Posterior vena cava (tissue), 2 donors: ENCODE measurements at regions of chr18 and their contacts with region 1.

Region 1: DNA sequence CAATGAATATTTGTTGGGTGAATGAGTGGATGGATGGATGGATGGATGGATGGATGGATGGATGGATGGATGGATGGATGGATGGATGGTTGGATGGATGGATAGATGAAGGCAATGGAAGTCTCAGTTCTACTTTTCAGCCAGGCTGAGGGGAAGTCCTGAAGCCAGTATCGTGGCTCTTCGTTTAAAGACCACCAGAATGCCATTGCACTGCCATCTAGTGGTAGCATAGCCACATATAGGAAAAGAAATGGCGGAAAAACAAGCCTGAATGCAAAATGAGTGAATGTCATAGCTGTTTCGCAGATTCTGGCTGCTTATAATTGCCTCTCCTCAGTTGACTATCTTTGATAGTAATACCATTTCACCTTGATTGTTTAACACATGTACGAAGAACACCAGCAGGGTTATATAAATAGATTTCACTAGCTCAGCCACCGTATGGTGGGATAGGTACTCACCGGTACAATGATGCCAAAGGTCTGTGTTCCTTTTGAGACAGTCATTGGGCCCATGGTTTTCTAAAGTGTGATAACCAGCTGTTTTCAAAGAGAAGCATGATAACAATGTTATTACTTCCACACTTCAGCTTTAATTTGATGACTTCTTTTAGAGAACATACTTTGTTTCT is 62.3 kb upstream of the GREB1L start:
- DNase-seq: no peak

Region 2: GRCh38 chr18:21004726-21005125 is 175.0 kb before region 1 on chr18:
- intact Hi-C with region 1: loop called in 1 of 2 experiments (anchors 10 kb)
- DNase-seq: no peak

Region 3: GRCh38 chr18:21117409-21118131 is 62.1 kb before region 1 on chr18:
- intact Hi-C with region 1: no loop called
- DNase-seq: no peak